SK-N-SH (cell line): ENCODE measurements at regions of chr10 and their contacts with region 1.

Region 1: GRCh38 chr10:97914837-97915211 is 65.2 kb downstream of the GOLGA7B start:
- DNase-seq: peak; percentile 92
- H3K4me3 ChIP-seq: peak overlapping the region in 1 of 2 experiments; percentile 50; a peak in 1 of 4 replicates
- H3K27ac ChIP-seq: no peak overlapping the region
- H3K4me1 ChIP-seq: peaks cover 0 to 6% of the 10 kb centered on the region in 2 experiments; a peak in 1 of 4 replicates
- H3K27me3 ChIP-seq: no peaks in the 10 kb centered on the region; the same call in none of the 2 replicates
- CTCF ChIP-seq: peak; percentile 93
- EP300 ChIP-seq: no peak
- RAD21 ChIP-seq: peak; percentile 93

Region 2: DNA sequence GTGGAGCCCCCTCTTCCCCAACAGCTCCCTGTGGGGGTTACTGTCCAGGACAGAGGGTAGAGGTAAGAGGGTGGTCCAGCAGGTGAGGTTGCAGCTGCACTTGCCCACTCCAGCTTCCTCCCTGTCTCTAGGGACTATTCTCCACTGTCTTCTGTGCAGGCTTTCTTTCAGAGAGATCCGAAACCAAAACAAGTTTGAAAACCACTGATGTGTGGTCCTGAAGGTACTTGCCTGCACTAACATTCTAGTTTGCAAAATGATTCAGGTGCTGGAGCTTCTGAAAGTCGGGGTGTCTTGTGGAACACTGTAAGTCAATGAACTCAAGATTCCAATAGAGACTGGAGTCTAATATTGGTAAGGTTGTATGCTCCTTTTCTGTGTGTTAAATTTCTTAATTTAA is 1706.6 kb before region 1 on chr10:
- CTCF ChIA-PET with region 1: no interaction called
- POLR2A ChIA-PET with region 1: no interaction called
- DNase-seq: no peak
- H3K4me3 ChIP-seq: no peak overlapping the region
- H3K27ac ChIP-seq: no peak overlapping the region
- H3K4me1 ChIP-seq: no peaks in the 10 kb centered on the region
- H3K27me3 ChIP-seq: peaks cover 9% of the 10 kb centered on the region; the same call in 1 of the 2 replicates
- CTCF ChIP-seq: no peak
- EP300 ChIP-seq: no peak
- RAD21 ChIP-seq: no peak

Region 3: GRCh38 chr10:97888641-97889262 is 26.1 kb before region 1 on chr10:
- CTCF ChIA-PET with region 1: interaction called, 14 read pairs
- POLR2A ChIA-PET with region 1: no interaction called
- DNase-seq: peak; percentile 88
- H3K4me3 ChIP-seq: no peak overlapping the region
- H3K27ac ChIP-seq: peak overlapping the region; percentile 35 to 66
- H3K4me1 ChIP-seq: peaks cover 5 to 22% of the 10 kb centered on the region in 2 experiments; a peak in 2 of 4 replicates
- H3K27me3 ChIP-seq: peaks cover 4% of the 10 kb centered on the region; the same call in 1 of the 2 replicates
- CTCF ChIP-seq: peak; percentile 41
- EP300 ChIP-seq: peak in 1 of 2 experiments; percentile 49; a peak in 2 of 4 replicates
- RAD21 ChIP-seq: no peak

Region 4: DNA sequence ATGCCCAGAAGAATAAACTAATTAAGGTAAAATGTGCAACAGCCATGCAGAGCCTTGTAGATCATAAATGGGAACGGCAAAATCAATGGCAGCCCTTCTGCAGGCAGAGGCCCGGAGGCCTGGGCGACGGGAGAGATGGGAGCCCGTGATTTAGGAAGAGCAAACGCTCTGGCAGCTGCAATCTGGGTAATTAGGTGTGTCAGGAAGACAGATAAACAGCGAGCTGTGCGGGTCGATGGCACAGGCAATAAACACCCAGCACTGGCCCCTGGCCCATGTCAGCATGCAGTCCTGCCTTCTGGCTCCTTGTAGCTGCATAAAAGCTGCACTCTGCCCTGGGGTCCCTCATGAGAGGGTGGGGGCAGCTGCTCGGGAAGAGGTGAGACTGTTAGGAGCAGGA is 12.8 kb after region 1 on chr10:
- CTCF ChIA-PET with region 1: interaction called, 13 read pairs
- POLR2A ChIA-PET with region 1: no interaction called
- DNase-seq: peak; percentile 45
- H3K4me3 ChIP-seq: no peak overlapping the region
- H3K27ac ChIP-seq: no peak overlapping the region
- H3K4me1 ChIP-seq: no peaks in the 10 kb centered on the region
- H3K27me3 ChIP-seq: no peaks in the 10 kb centered on the region
- CTCF ChIP-seq: no peak
- EP300 ChIP-seq: no peak
- RAD21 ChIP-seq: no peak

Region 5: DNA sequence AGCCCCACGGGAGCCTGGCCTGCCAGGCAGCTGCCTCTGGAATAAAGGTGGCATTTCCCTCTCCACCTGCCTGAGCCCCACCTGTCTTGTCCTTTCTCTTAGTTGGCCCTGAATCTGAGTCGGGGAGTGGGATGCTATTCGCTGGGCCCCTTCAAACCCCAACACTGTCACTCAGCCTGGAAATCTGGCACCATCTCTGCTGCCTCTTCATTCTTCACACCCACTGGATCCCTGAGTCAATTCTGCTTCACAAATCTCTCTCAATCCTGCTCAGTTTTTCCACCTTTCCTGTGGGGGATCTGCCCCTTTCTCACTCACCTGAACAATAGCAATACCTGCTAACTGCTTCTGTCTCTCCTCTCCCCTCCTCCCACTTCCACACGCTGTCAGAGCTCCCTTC is 105.0 kb after region 1 on chr10:
- CTCF ChIA-PET with region 1: interaction called, 10 read pairs
- POLR2A ChIA-PET with region 1: no interaction called
- DNase-seq: no peak
- H3K4me3 ChIP-seq: no peak overlapping the region
- H3K27ac ChIP-seq: no peak overlapping the region
- H3K4me1 ChIP-seq: no peaks in the 10 kb centered on the region
- H3K27me3 ChIP-seq: no peaks in the 10 kb centered on the region
- CTCF ChIP-seq: no peak
- EP300 ChIP-seq: no peak
- RAD21 ChIP-seq: no peak

Region 6: DNA sequence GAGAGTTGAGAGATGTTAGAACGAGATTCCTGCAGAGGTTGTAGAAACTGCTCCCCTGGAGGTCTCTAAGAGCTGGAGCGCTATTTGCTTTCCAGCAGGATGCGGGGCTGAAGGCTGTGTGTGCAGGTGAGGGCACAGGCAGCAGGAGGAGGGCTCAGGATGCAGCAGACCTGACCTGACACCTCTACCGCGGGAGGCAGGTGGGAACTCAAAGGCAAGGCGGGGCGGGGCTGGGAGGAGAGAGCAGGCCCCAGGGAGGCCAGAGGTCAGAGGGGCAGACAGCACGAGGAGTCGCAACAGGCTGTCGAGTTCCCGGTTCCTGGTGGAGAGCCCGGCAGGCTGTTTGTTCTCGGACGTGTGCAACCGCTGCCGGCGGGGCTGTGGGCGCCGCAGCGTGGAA is 123.5 kb after region 1 on chr10:
- CTCF ChIA-PET with region 1: interaction called, 319 read pairs
- POLR2A ChIA-PET with region 1: interaction called, 3 read pairs
- DNase-seq: no peak
- H3K4me3 ChIP-seq: no peak overlapping the region
- H3K27ac ChIP-seq: no peak overlapping the region
- H3K4me1 ChIP-seq: peaks cover 0 to 7% of the 10 kb centered on the region in 2 experiments; a peak in 1 of 4 replicates
- H3K27me3 ChIP-seq: peaks cover 30% of the 10 kb centered on the region; the same call in 1 of the 2 replicates
- CTCF ChIP-seq: no peak
- EP300 ChIP-seq: no peak
- RAD21 ChIP-seq: no peak

Region 7: GRCh38 chr10:98154076-98154475 is 239.3 kb after region 1 on chr10:
- CTCF ChIA-PET with region 1: no interaction called
- POLR2A ChIA-PET with region 1: no interaction called
- DNase-seq: no peak
- H3K4me3 ChIP-seq: no peak overlapping the region
- H3K27ac ChIP-seq: peak overlapping the region in 1 of 2 experiments; percentile 30; a peak in 1 of 4 replicates
- H3K4me1 ChIP-seq: no peaks in the 10 kb centered on the region; a peak in 1 of 4 replicates
- H3K27me3 ChIP-seq: no peaks in the 10 kb centered on the region
- CTCF ChIP-seq: no peak
- EP300 ChIP-seq: no peak
- RAD21 ChIP-seq: no peak